ENCODE measurements at regions of chr2 and their contacts with region 1.

Region 1: GRCh38 chr2:69714024-69714423 is 27.9 kb upstream of the ANXA4 start:
- DNase-seq: no peak
- H3K4me3 ChIP-seq: no peak overlapping the region
- H3K4me3 Mint-ChIP-seq: no peak overlapping the region
- H3K27ac ChIP-seq: no peak overlapping the region
- H3K27ac Mint-ChIP-seq: no peak overlapping the region
- H3K4me1 ChIP-seq: peaks cover 5 to 7% of the 10 kb centered on the region in 2 donors
- H3K4me1 Mint-ChIP-seq: peaks cover 13% of the 10 kb centered on the region
- H3K27me3 ChIP-seq: no peaks in the 10 kb centered on the region
- H3K27me3 Mint-ChIP-seq: peaks cover 1 to 4% (median 2%) of the 10 kb centered on the region in 3 donors
- CTCF ChIP-seq: no peak

Region 2: GRCh38 chr2:69033461-69034095 is 680.4 kb before region 1 on chr2:
- intact Hi-C with region 1: no loop called
- DNase-seq: no peak
- H3K4me3 ChIP-seq: no peak overlapping the region
- H3K4me3 Mint-ChIP-seq: no peak overlapping the region
- H3K27ac ChIP-seq: no peak overlapping the region
- H3K27ac Mint-ChIP-seq: no peak overlapping the region
- H3K4me1 ChIP-seq: no peaks in the 10 kb centered on the region
- H3K4me1 Mint-ChIP-seq: peaks cover 1% of the 10 kb centered on the region
- H3K27me3 ChIP-seq: peaks cover 0 to 5% of the 10 kb centered on the region in 2 donors
- H3K27me3 Mint-ChIP-seq: peaks cover 5 to 11% (median 8%) of the 10 kb centered on the region in 3 donors
- CTCF ChIP-seq: no peak

Region 3: DNA sequence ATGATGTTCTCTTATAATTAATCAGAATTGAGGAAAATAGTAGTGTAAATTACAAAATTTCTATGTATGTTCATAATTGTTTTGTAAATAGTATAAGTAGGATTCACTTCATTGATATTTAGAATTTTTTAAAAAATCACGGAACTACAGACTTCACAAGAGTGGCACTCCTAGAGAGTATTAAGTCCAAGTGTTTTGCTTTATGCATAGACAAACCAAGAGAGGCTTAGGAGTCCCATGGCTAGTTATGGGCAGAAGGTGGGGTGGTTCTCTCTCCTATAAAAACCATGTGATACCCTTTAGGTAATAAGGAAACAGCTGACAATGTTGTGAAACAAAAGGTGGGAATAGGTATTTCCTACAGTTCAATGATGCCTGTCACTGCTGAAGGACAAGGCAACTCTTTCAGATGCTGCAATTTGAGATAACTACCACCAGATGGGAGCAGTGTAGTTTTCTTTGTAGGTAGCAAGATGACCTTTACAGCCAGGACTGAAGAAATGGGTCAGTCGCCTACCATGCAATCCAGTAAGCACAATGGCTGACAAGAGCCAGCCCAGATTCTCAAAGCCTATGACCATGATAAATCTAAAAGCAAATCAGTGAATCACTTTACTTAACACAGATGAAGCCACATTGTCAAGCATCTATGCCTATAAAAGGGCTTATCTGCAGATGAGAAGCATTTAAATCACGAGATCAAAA is 154.4 kb before region 1 on chr2:
- intact Hi-C with region 1: loop called in 1 of 2 experiments (anchors 5 kb)
- DNase-seq: peak; percentile 43 to 67 (median 64)
- H3K4me3 ChIP-seq: no peak overlapping the region
- H3K4me3 Mint-ChIP-seq: no peak overlapping the region
- H3K27ac ChIP-seq: no peak overlapping the region
- H3K27ac Mint-ChIP-seq: no peak overlapping the region
- H3K4me1 ChIP-seq: peaks cover 12 to 16% of the 10 kb centered on the region in 2 donors
- H3K4me1 Mint-ChIP-seq: peaks cover 34% of the 10 kb centered on the region
- H3K27me3 ChIP-seq: no peaks in the 10 kb centered on the region
- H3K27me3 Mint-ChIP-seq: no peaks in the 10 kb centered on the region
- CTCF ChIP-seq: peak; percentile 83

Region 4: GRCh38 chr2:69589973-69590652 is 123.9 kb before region 1 on chr2:
- intact Hi-C with region 1: no loop called
- DNase-seq: no peak
- H3K4me3 ChIP-seq: no peak overlapping the region
- H3K4me3 Mint-ChIP-seq: no peak overlapping the region
- H3K27ac ChIP-seq: no peak overlapping the region
- H3K27ac Mint-ChIP-seq: peak overlapping the region in 1 of 7 donors; percentile 43
- H3K4me1 ChIP-seq: peaks cover 15 to 22% of the 10 kb centered on the region in 2 donors
- H3K4me1 Mint-ChIP-seq: peaks cover 44% of the 10 kb centered on the region
- H3K27me3 ChIP-seq: no peaks in the 10 kb centered on the region
- H3K27me3 Mint-ChIP-seq: no peaks in the 10 kb centered on the region
- CTCF ChIP-seq: no peak

Region 5: GRCh38 chr2:69652221-69652651 is 61.8 kb before region 1 on chr2:
- intact Hi-C with region 1: no loop called
- DNase-seq: no peak
- H3K4me3 ChIP-seq: no peak overlapping the region
- H3K4me3 Mint-ChIP-seq: no peak overlapping the region
- H3K27ac ChIP-seq: no peak overlapping the region
- H3K27ac Mint-ChIP-seq: no peak overlapping the region
- H3K4me1 ChIP-seq: peaks cover 7 to 22% of the 10 kb centered on the region in 2 donors
- H3K4me1 Mint-ChIP-seq: peaks cover 30% of the 10 kb centered on the region
- H3K27me3 ChIP-seq: no peaks in the 10 kb centered on the region
- H3K27me3 Mint-ChIP-seq: peaks cover 0 to 3% (median 0%) of the 10 kb centered on the region in 3 donors
- CTCF ChIP-seq: no peak

Measured in CD14-positive monocyte (primary cell).